Panc1 (cell line): ENCODE measurements at regions of chr10 and their contacts with region 1.

Region 1: DNA sequence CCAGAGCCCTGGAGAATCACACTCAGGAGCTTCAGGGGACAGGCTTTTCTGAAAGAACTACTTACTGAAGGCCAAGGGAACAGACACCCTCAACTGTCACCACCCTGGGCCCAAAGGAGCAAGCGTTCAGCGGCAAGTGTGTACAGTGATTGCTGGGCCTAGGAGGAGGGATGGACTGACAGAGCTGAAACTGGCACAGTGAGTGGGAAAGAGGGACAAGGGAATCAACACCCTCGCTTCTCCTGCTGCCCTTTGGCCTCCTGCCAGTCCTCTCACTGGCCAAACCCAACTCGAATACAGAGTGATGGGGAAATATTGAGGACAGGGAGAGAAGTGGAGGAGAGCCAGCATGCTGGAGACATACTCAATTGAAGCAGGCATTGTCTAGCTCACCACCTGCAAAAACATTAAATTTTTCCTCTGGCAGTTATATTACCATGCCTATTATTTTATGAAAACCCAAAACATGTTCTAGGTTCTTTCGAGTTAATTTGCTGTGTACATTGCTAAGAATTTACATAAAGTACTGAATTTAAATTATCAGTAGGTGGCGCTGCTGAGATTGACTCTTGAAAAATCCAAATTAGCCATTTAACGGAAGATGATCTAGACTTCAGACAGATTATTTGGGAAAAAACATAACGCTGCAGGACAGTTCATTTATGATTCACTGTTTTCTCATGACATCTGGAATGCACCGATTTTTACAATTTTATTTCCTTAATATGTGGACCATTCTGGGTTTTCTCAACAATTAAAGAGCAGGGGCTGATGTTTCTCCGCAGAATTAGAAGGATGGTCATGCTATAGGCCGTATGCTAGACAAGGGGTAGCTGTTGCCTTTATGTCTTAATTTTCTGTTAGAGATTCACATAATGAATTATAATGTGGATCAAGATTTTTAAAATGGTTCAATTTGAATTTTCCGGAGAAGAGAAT is 14.7 kb upstream of the TMEM236 start:
- DNase-seq: no peak
- ATAC-seq: peak; percentile 51; the same call in 1 of the 2 replicates
- H3K4me3 ChIP-seq: no peak overlapping the region
- H3K27ac ChIP-seq: no peak overlapping the region
- H3K4me1 ChIP-seq: no peaks in the 10 kb centered on the region
- H3K27me3 ChIP-seq: no peaks in the 10 kb centered on the region
- CTCF ChIP-seq: peak; percentile 73

Region 2: DNA sequence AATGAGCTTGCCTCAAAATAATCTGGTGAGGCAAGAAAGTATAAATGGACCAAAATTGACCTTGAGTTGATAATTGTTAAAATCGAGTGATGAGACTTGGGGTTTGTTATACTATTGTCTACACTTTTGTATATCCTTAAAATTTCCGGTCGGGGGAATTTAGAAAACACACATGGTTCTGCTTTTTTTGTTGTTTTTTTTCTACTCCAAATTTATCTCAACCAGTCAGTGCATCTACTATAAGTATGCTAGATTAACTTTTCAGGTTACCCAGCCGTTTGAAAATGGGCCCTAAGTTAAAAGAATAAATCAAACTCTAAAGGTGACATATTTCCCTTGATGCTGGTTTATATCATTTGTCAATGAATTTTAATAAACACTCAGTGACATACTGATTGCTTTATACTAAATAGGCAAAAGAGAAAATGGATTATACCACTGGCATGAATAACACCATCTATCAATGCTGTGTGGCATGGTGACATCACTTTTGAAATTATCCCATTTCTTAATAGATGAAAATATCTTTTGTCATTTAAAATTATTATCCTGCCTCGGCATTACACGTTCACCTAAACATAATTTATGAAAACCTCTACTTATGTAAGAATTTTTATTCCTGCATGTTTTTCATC is 242.6 kb before region 1 on chr10:
- CTCF ChIA-PET with region 1: interaction called, 12 read pairs
- POLR2A ChIA-PET with region 1: no interaction called
- in situ Hi-C with region 1: no loop called
- intact Hi-C with region 1: no loop called
- DNase-seq: no peak
- ATAC-seq: no peak
- H3K4me3 ChIP-seq: no peak overlapping the region
- H3K27ac ChIP-seq: no peak overlapping the region
- H3K4me1 ChIP-seq: no peaks in the 10 kb centered on the region
- H3K27me3 ChIP-seq: no peaks in the 10 kb centered on the region
- CTCF ChIP-seq: no peak

Region 3: DNA sequence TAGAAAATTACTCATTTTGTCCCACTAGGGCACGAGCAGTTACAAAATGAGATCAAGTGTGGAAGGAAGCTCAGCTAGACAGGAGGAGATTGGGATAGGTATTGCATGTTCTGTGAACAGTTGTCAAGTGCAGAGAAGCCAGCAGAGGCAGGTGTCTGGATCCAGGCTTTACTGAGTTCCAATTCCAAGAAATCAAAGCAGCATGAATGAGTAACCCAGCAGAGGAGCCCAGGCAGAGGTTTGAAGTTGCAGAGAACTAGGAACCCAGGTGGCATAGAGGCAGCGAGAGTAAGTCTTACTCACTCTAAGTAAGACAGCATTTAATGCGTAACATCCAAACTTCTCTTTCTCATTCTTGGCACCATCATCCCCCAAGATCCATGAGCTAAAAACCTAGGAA is 83.6 kb after region 1 on chr10:
- CTCF ChIA-PET with region 1: no interaction called
- POLR2A ChIA-PET with region 1: no interaction called
- in situ Hi-C with region 1: no loop called
- intact Hi-C with region 1: no loop called
- DNase-seq: no peak
- ATAC-seq: no peak
- H3K4me3 ChIP-seq: no peak overlapping the region
- H3K27ac ChIP-seq: no peak overlapping the region
- H3K4me1 ChIP-seq: no peaks in the 10 kb centered on the region; the same call in 1 of the 2 replicates
- H3K27me3 ChIP-seq: no peaks in the 10 kb centered on the region
- CTCF ChIP-seq: no peak

Region 4: GRCh38 chr10:17872191-17873091 is 135.1 kb after region 1 on chr10:
- CTCF ChIA-PET with region 1: no interaction called
- POLR2A ChIA-PET with region 1: no interaction called
- in situ Hi-C with region 1: no loop called
- intact Hi-C with region 1: loop called (anchors 2 kb)
- DNase-seq: peak; percentile 24
- ATAC-seq: no peak
- H3K4me3 ChIP-seq: no peak overlapping the region
- H3K27ac ChIP-seq: no peak overlapping the region
- H3K4me1 ChIP-seq: no peaks in the 10 kb centered on the region
- H3K27me3 ChIP-seq: no peaks in the 10 kb centered on the region
- CTCF ChIP-seq: peak; percentile 61

Region 5: GRCh38 chr10:18214691-18215563 is 477.6 kb after region 1 on chr10:
- CTCF ChIA-PET with region 1: no interaction called
- POLR2A ChIA-PET with region 1: no interaction called
- in situ Hi-C with region 1: no loop called
- intact Hi-C with region 1: loop called (anchors 10 kb)
- DNase-seq: peak; percentile 24
- ATAC-seq: 0 out of 2 replicates have a peak, but pooled peaks have one; percentile 63
- H3K4me3 ChIP-seq: no peak overlapping the region
- H3K27ac ChIP-seq: no peak overlapping the region
- H3K4me1 ChIP-seq: no peaks in the 10 kb centered on the region
- H3K27me3 ChIP-seq: no peaks in the 10 kb centered on the region
- CTCF ChIP-seq: peak; percentile 80